ENCODE measurements at regions of chr10 and their contacts with region 1.

Region 1: DNA sequence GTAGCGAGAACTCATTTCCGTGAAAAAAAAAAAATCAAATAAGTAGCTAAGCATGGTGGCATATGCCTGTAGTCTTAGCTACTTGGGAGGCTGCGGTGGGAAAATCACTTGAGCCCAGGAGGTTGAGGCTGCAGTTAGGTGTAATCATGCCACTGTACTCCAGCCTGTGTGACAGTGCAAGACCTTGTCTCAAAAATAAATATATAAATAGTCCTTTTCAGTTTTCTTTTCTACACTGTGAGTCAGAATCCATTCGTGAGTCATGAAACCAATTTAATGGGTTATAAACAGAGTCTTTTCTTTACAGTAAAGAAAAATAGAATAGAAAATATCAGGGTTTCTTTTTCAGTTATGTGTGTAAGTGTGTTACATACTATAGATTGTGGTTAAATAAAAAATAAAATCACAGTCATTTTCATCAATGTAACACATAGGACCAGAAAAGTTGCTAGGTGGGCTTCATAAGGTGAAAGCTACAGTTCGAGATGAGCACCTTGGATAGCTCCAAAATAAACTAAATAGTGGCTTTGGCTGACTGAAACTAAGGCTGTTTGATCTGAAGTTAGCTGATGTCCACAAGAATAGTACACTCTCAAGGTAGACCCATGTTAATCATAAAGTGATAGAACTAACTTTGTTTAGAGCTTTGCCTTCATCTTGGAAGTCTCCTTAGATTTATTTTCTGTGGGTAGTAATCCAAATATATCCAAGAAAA is 781.1 kb downstream of the GATA3 start:
- DNase-seq: no peak
- H3K4me3 Mint-ChIP-seq: no peak overlapping the region
- H3K27ac Mint-ChIP-seq: no peak overlapping the region
- H3K4me1 Mint-ChIP-seq: peaks cover 36% of the 10 kb centered on the region
- H3K27me3 Mint-ChIP-seq: no peaks in the 10 kb centered on the region

Region 2: GRCh38 chr10:7872041-7872442 is 963.6 kb before region 1 on chr10:
- intact Hi-C with region 1: loop called (anchors 10 kb)
- DNase-seq: no peak
- H3K4me3 Mint-ChIP-seq: peak overlapping the region; percentile 89
- H3K27ac Mint-ChIP-seq: peak overlapping the region; percentile 64
- H3K4me1 Mint-ChIP-seq: peaks cover 13% of the 10 kb centered on the region
- H3K27me3 Mint-ChIP-seq: no peaks in the 10 kb centered on the region

Region 3: DNA sequence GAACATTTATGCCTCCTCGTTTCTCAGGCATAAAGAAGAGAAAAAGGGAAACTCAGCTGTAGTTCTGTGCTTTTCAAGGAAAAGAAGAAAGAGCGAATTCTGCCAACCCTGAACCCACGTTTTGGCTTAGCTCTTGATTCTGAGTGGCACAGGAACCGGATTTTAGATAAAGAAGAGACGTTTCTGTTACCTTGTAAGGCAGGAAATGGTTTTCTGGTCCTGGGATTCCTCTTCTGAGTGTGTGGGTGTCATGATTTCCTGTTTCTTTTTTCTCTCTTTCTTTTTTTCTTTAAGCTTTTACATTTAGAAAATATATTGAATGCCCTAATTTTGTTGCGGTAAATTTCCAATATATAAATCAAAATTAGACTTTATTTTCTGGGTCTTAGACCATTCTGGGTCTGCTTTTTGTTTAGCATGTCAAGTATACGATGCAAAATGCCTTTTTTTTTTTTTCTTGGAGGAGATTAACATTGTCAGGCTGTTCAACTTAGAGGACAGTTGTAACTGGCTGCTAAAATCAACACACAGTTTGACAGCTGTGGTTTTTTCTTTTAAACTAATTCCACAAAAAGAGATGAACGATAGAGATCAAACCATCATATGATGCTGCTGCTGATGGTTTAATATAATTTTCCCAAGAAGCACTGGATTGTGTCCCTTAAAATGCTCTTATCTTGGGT is 590.3 kb before region 1 on chr10:
- intact Hi-C with region 1: loop called (anchors 5 kb)
- DNase-seq: no peak
- H3K4me3 Mint-ChIP-seq: peak overlapping the region; percentile 58
- H3K27ac Mint-ChIP-seq: peak overlapping the region; percentile 93
- H3K4me1 Mint-ChIP-seq: peaks cover 76% of the 10 kb centered on the region
- H3K27me3 Mint-ChIP-seq: no peaks in the 10 kb centered on the region

Region 4: GRCh38 chr10:8365935-8366911 is 469.4 kb before region 1 on chr10:
- intact Hi-C with region 1: loop called (anchors 2 kb)
- DNase-seq: peak; percentile 46
- H3K4me3 Mint-ChIP-seq: peak overlapping the region; percentile 64
- H3K27ac Mint-ChIP-seq: peak overlapping the region; percentile 98
- H3K4me1 Mint-ChIP-seq: peaks cover 69% of the 10 kb centered on the region
- H3K27me3 Mint-ChIP-seq: no peaks in the 10 kb centered on the region

Region 5: GRCh38 chr10:8778713-8779112 is 56.9 kb before region 1 on chr10:
- intact Hi-C with region 1: loop called (anchors 2 kb)
- DNase-seq: no peak
- H3K4me3 Mint-ChIP-seq: no peak overlapping the region
- H3K27ac Mint-ChIP-seq: peak overlapping the region; percentile 84
- H3K4me1 Mint-ChIP-seq: peaks cover 33% of the 10 kb centered on the region
- H3K27me3 Mint-ChIP-seq: no peaks in the 10 kb centered on the region

Region 6: GRCh38 chr10:8990280-8990987 is 154.8 kb after region 1 on chr10:
- intact Hi-C with region 1: loop called (anchors 1 kb)
- DNase-seq: no peak
- H3K4me3 Mint-ChIP-seq: no peak overlapping the region
- H3K27ac Mint-ChIP-seq: peak overlapping the region; percentile 73
- H3K4me1 Mint-ChIP-seq: peaks cover 58% of the 10 kb centered on the region
- H3K27me3 Mint-ChIP-seq: no peaks in the 10 kb centered on the region

Region 7: DNA sequence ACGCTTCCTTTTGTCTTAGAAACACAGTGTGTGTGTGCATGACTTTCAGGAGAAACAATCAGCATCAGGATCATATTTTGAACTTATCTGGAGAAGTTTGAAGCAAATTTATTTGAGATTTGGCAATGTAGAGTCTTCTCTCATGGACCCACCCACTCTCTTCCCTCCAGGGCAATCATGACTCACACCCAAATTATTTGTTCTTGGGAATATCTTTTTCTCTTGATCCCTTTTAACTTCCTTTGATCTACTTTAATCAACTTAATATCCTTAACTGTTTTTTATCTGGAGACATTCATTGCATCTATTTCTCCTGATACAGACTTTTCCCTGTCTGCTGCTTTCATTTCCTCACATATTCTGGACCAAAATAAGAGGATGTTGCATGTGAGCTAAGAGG is 393.2 kb after region 1 on chr10:
- intact Hi-C with region 1: loop called (anchors 5 kb)
- DNase-seq: no peak
- H3K4me3 Mint-ChIP-seq: no peak overlapping the region
- H3K27ac Mint-ChIP-seq: no peak overlapping the region
- H3K4me1 Mint-ChIP-seq: peaks cover 41% of the 10 kb centered on the region
- H3K27me3 Mint-ChIP-seq: peaks cover 7% of the 10 kb centered on the region

Measured in activated T-helper 2 cell treated with anti-CD3 and anti-CD28 coated beads, Interferon-gamma antibody, Interleukin-2, Interleukin-4, amounts not matched to agents 10 μg/mL and 5 μg/mL and 100 μg/mL, durations not matched to agents 14 hours and 24 hours and 36 hours (primary cell).